ENCODE measurements at regions of chr11 and their contacts with region 1.

Region 1: GRCh38 chr11:85595285-85595884 is 31.8 kb downstream of the DLG2 start:
- DNase-seq: no peak
- H3K4me3 ChIP-seq: no peak overlapping the region
- H3K27ac ChIP-seq: no peak overlapping the region
- H3K4me1 ChIP-seq: no peaks in the 10 kb centered on the region
- H3K27me3 ChIP-seq: no peaks in the 10 kb centered on the region
- CTCF ChIP-seq: peak; percentile 52 to 61 (median 58)
- EP300 ChIP-seq: no peak
- POLR2A ChIP-seq: no peak

Region 2: GRCh38 chr11:85664615-85665481 is 69.5 kb after region 1 on chr11 and contains the start of gene CREBZF:
- intact Hi-C with region 1: loop called (anchors 5 kb)
- DNase-seq: peak; percentile 98
- H3K4me3 ChIP-seq: peak within 1 kb of the TSS; percentile 82 to 90 (median 86)
- H3K27ac ChIP-seq: peak within 1 kb of the TSS; percentile 94 to 99 (median 96)
- H3K4me1 ChIP-seq: peaks cover 34 to 36% (median 35%) of the 10 kb centered on the region in 4 donors
- H3K27me3 ChIP-seq: no peaks in the 10 kb centered on the region
- CTCF ChIP-seq: no peak
- EP300 ChIP-seq: no peak
- POLR2A ChIP-seq: peak; percentile 94
- total RNA-seq, gene CREBZF: 34.8 to 60.6 (median 37.0) TPM

Region 3: GRCh38 chr11:85854557-85855340 is 259.4 kb after region 1 on chr11:
- intact Hi-C with region 1: loop called (anchors 10 kb)
- DNase-seq: peak; percentile 96
- H3K4me3 ChIP-seq: peak overlapping the region; percentile 57 to 64 (median 59)
- H3K27ac ChIP-seq: peak overlapping the region; percentile 75 to 82 (median 80)
- H3K4me1 ChIP-seq: peaks cover 7 to 14% (median 8%) of the 10 kb centered on the region in 4 donors
- H3K27me3 ChIP-seq: no peaks in the 10 kb centered on the region
- CTCF ChIP-seq: peak; percentile 95 to 99 (median 97)
- EP300 ChIP-seq: no peak
- POLR2A ChIP-seq: no peak

Region 4: DNA sequence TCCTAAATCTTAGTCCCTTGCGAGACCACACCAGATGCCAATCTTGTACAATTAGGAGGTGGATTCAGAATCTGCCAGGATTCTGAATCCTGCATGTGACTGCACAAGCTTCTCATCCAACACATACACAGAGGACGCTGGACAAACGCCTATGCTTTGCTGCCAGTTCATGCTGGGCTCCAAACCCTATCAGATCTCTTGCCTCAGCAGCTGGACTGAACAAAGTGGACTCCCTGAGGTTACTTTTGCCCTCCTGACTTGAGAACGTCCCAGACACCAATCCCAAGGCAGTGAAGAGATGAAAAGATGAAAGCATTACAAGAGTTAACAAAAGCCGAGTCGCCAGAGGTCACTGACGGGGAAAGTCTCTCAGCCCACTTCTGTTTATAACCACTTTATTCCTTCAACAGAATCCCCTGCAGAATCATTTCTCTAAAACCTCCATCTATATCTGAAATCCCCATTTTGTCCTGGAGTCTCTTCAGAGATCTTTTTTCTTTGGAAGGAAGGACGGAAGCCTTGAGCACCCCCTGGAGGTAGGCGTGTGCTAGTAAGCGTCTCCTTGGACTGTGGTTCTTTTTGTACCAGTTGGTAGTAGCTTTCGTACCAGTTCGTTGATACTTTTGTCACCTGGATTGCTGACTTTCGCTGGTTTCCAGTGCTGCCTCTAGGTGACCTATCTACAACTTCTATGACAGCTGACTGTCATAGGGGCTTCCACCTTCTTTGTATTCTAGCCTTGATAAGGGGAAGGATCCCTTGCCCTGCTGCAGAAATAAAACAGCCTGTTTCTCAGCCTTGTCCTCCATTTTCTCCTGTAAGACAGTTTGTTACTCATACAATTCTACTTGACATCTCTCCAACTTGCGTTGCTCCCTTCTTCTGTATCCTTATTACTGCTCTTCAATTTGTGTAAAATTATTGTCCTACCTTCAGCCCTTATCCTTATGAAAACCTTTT is 623.0 kb after region 1 on chr11:
- intact Hi-C with region 1: loop called (anchors 10 kb)
- DNase-seq: no peak
- H3K4me3 ChIP-seq: peak overlapping the region; percentile 19 to 45 (median 28)
- H3K27ac ChIP-seq: no peak overlapping the region
- H3K4me1 ChIP-seq: peaks cover 3 to 11% (median 9%) of the 10 kb centered on the region in 4 donors
- H3K27me3 ChIP-seq: no peaks in the 10 kb centered on the region
- CTCF ChIP-seq: peak; percentile 87 to 97 (median 88)
- EP300 ChIP-seq: no peak
- POLR2A ChIP-seq: no peak

Measured in esophagus muscularis mucosa (tissue), 4 donors.